ENCODE measurements at regions of chr6 and their contacts with region 1.

Region 1: DNA sequence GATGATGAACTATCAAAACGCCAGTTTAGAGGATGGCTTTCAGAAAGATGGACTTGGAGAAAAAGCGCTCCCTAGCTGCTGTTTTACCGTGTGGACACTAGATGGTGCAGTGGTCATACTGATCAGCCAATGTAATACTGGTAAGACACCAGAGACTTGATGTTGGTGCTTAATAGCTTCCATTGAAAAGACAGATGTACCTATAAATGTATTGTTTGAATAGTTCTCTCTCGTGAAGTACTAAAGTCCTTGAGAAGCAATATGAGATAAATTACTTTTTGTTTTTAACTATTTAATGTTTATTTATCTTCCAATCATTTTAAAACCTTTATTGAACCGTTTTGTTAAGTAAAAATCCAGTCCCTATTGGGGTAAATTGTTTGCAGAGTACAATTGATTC is 63.9 kb upstream of the FUCA2 start:
- DNase-seq: no peak
- ATAC-seq: peak; percentile 75 to 93 (median 86)
- H3K4me3 ChIP-seq: no peak overlapping the region
- H3K27ac ChIP-seq: no peak overlapping the region
- H3K4me1 ChIP-seq: no peaks in the 10 kb centered on the region
- H3K27me3 ChIP-seq: no peaks in the 10 kb centered on the region
- CTCF ChIP-seq: peak; percentile 90

Region 2: GRCh38 chr6:143652841-143653331 is 77.4 kb after region 1 on chr6:
- intact Hi-C with region 1: no loop called
- DNase-seq: no peak
- ATAC-seq: no peak
- H3K4me3 ChIP-seq: no peak overlapping the region
- H3K27ac ChIP-seq: no peak overlapping the region
- H3K4me1 ChIP-seq: no peaks in the 10 kb centered on the region
- H3K27me3 ChIP-seq: no peaks in the 10 kb centered on the region
- CTCF ChIP-seq: no peak

Region 3: DNA sequence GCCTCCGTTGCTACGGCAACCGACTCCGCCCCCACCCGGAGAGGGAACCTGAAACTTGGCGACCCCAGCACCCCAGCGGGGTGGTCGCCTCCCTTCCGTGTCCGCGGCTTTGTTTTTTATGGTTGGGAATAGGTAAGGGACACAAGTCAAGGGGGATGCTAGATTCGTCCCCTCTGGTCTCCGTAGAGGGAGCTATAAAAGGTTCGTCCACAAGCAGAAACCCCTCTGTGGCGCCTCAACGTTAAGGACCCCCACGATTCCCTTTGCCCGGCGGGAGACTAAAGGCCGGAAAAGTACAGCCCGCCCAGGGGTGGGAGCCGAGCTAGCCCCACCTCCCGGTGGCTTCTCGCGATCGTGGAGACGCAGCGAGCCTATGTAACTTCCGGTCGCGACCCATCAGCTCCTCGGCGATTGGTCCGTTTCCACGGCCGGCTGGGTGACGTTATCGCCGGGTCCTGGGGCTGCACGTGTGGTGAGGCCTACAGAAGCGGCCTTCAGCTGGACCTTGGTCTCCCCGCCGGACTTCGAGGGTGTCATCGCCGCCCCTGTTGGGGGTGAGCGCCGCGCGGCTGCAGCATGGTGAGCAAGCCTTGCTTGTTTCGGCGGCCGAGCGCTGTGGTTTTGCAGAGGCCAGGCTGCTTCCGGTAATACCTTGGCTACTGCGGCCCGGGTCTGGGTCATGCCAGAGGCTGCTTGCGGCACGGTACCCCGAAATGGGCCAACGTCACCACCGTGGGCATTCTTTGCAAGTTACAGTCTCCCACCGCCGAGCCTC is 267.6 kb after region 1 on chr6 and contains the start of gene LTV1:
- intact Hi-C with region 1: loop called in 1 of 2 experiments (anchors 10 kb)
- DNase-seq: peak; percentile 97 to 98
- ATAC-seq: peak; percentile 99 to 100 (median 100)
- H3K4me3 ChIP-seq: peak within 1 kb of the TSS; percentile 85
- H3K27ac ChIP-seq: peak within 1 kb of the TSS; percentile 86
- H3K4me1 ChIP-seq: peaks cover 15% of the 10 kb centered on the region
- H3K27me3 ChIP-seq: no peaks in the 10 kb centered on the region
- CTCF ChIP-seq: no peak
- total RNA-seq, gene LTV1: 19.1 to 36.6 (median 31.7) TPM

Region 4: GRCh38 chr6:143940011-143940597 is 364.7 kb after region 1 on chr6:
- intact Hi-C with region 1: loop called in 1 of 2 experiments (anchors 5 kb)
- DNase-seq: no peak
- ATAC-seq: no peak
- H3K4me3 ChIP-seq: no peak overlapping the region
- H3K27ac ChIP-seq: no peak overlapping the region
- H3K4me1 ChIP-seq: no peaks in the 10 kb centered on the region
- H3K27me3 ChIP-seq: no peaks in the 10 kb centered on the region
- CTCF ChIP-seq: peak; percentile 57

Region 5: DNA sequence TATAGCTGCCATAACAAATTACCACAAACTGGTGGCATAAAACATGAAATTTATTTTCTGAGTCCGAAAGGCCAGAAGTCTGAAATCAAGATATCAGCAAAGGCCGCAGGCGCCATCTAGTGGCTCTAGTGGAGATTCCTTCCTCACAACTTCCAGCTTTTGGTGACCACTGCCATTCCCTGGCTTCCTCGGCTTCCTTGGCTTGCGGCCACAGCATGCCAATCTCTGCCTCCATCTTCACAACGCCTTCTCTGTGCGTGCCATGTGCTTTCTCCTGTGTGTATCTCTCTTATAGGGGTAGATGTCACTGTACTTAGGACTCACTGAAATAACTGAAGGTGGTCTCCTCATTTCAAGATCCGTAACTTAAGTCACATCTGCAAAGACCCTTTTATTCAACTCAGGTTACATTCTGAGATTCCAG is 438.1 kb after region 1 on chr6:
- intact Hi-C with region 1: loop called (anchors 1 to 2 kb)
- DNase-seq: peak; percentile 72 to 81
- ATAC-seq: peak in 2 of 4 donors; percentile 47 to 69
- H3K4me3 ChIP-seq: no peak overlapping the region
- H3K27ac ChIP-seq: no peak overlapping the region
- H3K4me1 ChIP-seq: no peaks in the 10 kb centered on the region
- H3K27me3 ChIP-seq: peaks cover 0 to 3% (median 0%) of the 10 kb centered on the region in 3 donors
- CTCF ChIP-seq: peak; percentile 94